Head of caudate nucleus (tissue), 42 donors: ENCODE measurements at regions of chr9 and their contacts with region 1.

Region 1: DNA sequence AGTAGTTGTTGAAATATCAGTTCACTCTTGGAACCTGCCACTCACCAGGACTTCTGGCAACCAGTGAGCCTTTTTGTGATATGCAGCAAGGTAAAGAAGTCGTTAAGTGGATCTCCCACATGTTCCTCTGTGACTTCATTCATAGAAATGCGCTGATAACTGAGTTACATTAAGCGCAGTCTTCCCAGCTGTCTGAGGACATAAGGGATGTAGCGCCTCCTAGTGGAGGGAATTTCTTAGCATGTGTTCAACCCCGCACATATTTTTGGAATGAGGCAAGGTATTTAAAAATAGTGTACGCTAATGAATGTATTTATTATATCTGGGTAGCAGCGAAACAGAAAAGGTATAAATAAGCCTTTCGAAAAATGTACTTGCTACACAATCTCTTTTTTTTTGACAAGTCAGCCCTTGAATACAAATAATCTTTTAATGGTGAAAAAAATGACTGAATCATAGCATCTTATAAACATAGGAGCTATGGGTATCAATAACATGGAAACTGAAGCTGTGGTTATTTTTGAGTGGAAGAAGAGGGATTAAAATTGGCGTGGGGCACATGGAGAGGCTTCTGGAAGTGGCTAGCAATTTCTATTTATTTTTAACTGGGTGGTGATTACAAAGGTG is 38.0 kb downstream of the PALM2AKAP2 start:
- DNase-seq: peak in 41 of 42 donors; percentile 9 to 93 (median 67)

Region 2: DNA sequence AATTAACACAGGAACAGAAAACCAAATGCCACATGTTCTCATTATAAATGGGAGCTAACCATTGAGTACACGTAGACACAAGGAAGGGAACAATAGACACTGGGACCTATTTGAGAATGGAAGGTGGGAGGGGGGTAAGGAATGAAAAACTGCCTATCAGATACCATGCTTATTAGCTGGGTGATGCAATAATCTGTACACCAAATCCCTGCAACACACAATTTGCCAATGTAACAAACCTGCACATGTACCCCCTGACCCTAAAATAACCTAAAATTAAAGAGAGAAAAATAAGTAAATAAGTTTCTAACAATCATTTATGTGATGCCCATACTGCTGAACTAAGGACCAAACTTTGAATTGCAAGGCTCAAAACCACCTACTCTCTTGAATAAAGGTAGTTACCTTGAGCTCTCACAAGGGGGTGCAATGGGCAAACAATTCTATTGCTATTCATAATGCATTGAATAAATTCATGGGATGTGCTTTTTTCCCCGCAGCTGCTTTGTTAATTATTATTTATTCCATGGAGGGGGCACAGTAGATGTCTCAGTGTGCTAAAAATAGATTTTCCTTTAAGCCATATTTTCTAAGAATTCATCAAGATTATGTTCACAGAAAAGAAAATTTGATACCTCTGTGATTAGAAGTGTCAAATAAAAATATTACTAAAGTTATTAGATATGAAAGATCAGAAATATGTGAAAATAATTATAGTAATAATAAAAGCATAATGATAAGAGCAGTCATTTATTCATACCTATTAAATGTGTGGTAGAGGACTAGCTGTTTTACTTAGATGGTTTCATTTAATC is 243.7 kb before region 1 on chr9:
- intact Hi-C with region 1: loop called (anchors 10 kb)
- DNase-seq: peak in 28 of 42 donors; percentile 15 to 89 (median 60)

Region 3: DNA sequence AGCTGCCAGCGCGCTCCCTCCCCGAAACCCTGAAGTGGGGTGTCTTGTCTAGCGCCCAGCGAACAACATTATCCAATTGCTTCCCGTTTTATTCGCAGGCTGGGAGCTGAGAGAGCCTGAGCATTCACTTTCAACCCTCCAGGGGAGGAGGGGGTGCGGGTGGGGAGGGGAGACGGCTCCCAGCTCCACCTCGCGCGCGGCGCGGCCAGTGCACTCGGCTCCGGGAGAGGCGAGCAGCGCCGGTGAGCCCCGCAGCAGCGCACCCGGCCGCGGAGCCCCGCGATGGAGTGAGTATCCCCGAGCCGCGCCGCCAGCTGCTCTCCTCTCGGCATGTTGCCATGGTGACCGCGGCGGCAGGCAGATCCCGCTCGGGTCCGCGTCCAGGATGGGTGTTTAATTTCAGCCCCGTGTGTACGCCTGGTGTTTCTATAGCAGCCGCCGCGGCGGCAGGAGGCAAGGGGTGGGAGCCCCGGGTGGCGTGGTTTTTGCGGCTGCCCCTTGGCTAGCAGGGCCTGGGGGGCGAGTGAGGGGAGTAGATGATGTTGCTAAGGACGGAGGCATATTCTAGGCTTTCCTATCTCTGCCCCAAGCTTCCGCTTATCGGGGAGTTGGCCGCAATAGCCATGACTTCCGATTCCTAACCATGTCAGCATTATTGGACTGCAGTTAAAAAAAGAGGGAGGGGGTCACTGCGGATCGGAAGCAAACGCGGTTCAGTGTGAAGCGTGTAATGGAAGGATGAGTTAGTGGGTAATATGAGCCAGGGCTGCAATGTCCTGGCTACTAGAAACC is 177.2 kb before region 1 on chr9:
- intact Hi-C with region 1: loop called (anchors 10 kb)
- DNase-seq: peak; percentile 65 to 91 (median 80)

Region 4: DNA sequence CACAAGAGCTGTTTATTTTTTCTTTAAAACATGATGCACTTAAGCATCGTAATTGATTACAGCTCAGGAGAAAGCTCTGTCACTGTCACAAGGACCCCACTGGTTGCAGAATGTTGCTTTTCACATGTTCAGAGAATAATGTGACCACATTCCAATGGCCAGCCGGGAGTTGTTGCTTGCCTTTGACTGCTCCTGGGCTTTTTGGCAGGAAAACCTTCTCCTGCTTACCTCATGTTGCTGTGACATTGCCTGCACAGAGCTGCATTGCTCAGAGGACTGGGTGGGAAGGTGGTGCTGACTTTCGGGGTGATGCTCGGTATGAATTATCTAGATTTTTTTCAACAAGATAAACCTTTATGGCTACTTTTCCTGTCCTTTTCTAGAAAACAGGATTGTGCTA is 50.2 kb after region 1 on chr9:
- intact Hi-C with region 1: no loop called
- DNase-seq: peak in 34 of 42 donors; percentile 10 to 76 (median 46)